Transverse colon (tissue), 4 donors: ENCODE measurements at regions of chr20 and their contacts with region 1.

Region 1: DNA sequence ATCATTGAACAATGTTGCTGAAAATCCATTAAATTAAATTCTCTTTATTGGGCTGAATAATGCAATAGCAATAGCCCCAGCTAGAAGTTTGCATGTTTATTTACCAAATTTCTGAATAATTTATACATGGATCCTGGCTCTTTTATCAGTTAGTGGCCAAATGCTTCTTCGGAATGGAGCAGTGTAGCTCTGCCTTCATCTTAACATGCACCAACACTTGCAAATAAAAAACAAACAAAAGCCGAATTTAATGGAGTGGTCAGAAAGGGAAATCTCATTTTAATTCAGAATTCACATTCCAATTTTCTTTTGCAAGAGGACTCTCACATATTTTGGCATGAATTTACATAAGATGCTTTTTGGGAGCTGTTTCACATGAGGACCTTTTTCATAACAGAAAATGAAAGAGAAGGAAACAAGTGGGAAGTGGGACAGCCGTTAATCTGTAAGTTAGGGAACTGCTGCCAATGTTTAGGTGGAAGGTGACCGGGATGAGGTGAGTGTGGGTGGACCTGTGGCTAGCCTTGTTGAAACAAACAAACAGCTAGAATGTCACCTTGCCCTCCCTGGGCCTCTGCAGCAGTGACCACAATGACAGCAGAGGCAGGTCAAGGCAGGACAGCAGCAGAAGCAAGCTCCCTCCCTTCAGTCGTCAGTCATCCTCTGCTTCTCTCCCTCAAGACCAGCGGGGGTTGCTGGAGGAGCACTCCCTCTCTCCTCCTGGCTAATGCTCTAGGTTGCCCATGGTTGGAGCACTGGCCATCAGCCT is 73.2 kb downstream of the INSM1 start:
- DNase-seq: no peak
- H3K4me3 ChIP-seq: no peak overlapping the region
- H3K27ac ChIP-seq: peak overlapping the region in 2 of 4 donors; percentile 27 to 67
- H3K4me1 ChIP-seq: peaks cover 0 to 22% (median 17%) of the 10 kb centered on the region in 4 donors
- H3K27me3 ChIP-seq: no peaks in the 10 kb centered on the region
- CTCF ChIP-seq: no peak
- EP300 ChIP-seq: no peak
- POLR2A ChIP-seq: no peak

Region 2: DNA sequence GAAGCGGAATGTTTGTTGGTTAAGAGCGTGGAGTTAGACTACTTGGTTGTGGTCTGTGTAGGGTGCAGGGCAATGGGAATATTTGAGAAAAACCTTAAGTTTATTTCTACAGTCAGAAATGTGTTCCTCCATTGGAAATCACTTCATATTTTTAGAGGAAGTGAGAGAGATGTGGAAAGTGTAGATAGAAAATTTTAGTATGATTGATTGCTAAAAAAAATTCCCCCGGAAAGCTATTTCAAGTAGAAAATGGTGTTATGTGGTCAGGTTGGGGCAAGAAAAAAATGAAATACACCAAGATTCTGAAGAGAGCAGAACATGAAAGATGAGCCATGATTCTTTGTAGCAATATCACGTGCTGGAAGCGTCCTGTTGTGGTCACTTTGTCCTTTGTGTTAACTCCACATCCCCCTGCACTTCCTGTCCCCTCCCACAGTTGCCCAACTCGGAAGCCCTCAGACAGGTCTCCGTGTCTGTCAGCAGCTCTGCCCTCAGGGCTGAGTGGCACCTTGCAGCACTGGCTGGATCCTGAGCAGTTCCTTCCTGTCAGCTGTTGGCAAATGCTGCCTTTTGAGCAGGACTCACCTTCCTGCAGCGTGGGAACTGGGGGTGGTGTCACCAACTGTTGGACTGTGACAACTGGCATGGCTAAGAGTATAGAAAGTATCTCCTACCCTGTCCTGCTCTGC is 1366.1 kb before region 1 on chr20:
- in situ Hi-C with region 1: no loop called
- intact Hi-C with region 1: loop called (anchors 5 kb)
- DNase-seq: no peak
- H3K4me3 ChIP-seq: no peak overlapping the region
- H3K27ac ChIP-seq: no peak overlapping the region
- H3K4me1 ChIP-seq: no peaks in the 10 kb centered on the region
- H3K27me3 ChIP-seq: no peaks in the 10 kb centered on the region
- CTCF ChIP-seq: no peak
- EP300 ChIP-seq: no peak
- POLR2A ChIP-seq: no peak

Region 3: GRCh38 chr20:20161611-20162010 is 279.5 kb before region 1 on chr20:
- in situ Hi-C with region 1: no loop called
- intact Hi-C with region 1: no loop called
- DNase-seq: no peak
- H3K4me3 ChIP-seq: no peak overlapping the region
- H3K27ac ChIP-seq: no peak overlapping the region
- H3K4me1 ChIP-seq: no peaks in the 10 kb centered on the region
- H3K27me3 ChIP-seq: no peaks in the 10 kb centered on the region
- CTCF ChIP-seq: no peak
- EP300 ChIP-seq: no peak
- POLR2A ChIP-seq: no peak

Region 4: DNA sequence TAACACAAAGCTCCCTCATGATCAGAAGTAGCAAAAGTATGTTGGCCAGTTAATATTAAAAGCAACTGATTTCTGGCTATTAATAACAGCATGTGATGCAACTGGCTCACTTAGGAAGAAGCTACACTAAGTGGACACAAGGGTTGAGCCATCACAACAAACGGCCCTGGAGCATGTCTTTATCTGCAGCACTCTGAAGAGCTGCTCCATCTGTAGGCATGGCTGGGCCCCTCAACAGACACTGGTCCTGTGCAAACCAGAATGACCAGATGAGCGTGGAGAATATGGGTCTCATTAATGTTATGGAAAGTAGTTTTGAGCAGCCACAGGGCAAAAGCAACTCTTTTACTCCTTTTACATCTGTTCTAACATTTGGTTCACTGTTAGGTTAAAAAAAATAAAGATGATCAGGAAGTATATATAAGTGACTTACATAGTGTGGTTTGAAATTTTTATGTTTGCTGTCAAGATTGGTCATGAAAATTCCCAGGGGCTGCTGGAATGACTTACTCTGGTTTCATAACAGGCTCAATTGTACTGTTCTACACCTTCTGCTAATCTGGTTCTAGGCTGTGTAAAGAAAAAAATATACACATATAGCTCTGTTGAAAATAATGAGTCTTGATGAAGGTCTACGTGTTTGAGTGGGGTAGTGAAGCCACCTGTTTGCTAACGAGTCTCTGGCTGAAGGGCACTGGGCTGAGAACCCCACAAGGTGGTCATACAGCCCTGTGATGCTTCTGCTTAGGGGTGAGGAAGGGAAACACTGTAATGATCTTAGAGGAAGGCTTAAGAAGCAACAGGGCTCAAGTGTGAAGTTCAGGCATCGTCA is 15.0 kb before region 1 on chr20:
- in situ Hi-C with region 1: no loop called
- intact Hi-C with region 1: no loop called
- DNase-seq: no peak
- H3K4me3 ChIP-seq: no peak overlapping the region
- H3K27ac ChIP-seq: no peak overlapping the region
- H3K4me1 ChIP-seq: no peaks in the 10 kb centered on the region
- H3K27me3 ChIP-seq: no peaks in the 10 kb centered on the region
- CTCF ChIP-seq: no peak
- EP300 ChIP-seq: no peak
- POLR2A ChIP-seq: no peak